ENCODE measurements at regions of chr15 and their contacts with region 1.

Region 1: GRCh38 chr15:65133548-65134200 is at the start of gene PDCD7:
- DNase-seq: peak; percentile 82
- H3K4me3 Mint-ChIP-seq: peak within 1 kb of the TSS; percentile 86
- H3K27ac Mint-ChIP-seq: peak within 1 kb of the TSS; percentile 87
- H3K4me1 Mint-ChIP-seq: peaks cover 15% of the 10 kb centered on the region
- H3K27me3 Mint-ChIP-seq: no peaks in the 10 kb centered on the region
- total RNA-seq, gene PDCD7: 51.9 and 68.4 TPM in 2 replicates

Region 2: GRCh38 chr15:65298731-65299130 is 165.1 kb after region 1 on chr15:
- intact Hi-C with region 1: loop called (anchors 5 kb)
- DNase-seq: no peak
- H3K4me3 Mint-ChIP-seq: peak overlapping the region; percentile 84
- H3K27ac Mint-ChIP-seq: peak overlapping the region; percentile 63
- H3K4me1 Mint-ChIP-seq: peaks cover 18% of the 10 kb centered on the region
- H3K27me3 Mint-ChIP-seq: no peaks in the 10 kb centered on the region

Measured in activated T-helper 2 cell treated with anti-CD3 and anti-CD28 coated beads, Interferon-gamma antibody, Interleukin-2, Interleukin-4, amounts not matched to agents 10 μg/mL and 5 μg/mL and 100 μg/mL, durations not matched to agents 14 hours and 24 hours and 36 hours (primary cell).